A549 (cell line): ENCODE measurements at regions of chr7 and their contacts with region 1.

Region 1: GRCh38 chr7:47818796-47819606 is 129.3 kb downstream of the PKD1L1 start:
- DNase-seq: peak; percentile 72 to 82
- ATAC-seq: peak; percentile 87 to 88; a peak in 5 of 6 replicates
- H3K4me3 ChIP-seq: no peak overlapping the region
- H3K27ac ChIP-seq: peak overlapping the region; percentile 79 to 90
- H3K4me1 ChIP-seq: peaks cover 48% of the 10 kb centered on the region
- CTCF ChIP-seq: peak; percentile 97
- EP300 ChIP-seq: no peak; a peak in 1 of 5 replicates
- POLR2A ChIP-seq: no peak
- RAD21 ChIP-seq: peak; percentile 99

Region 2: GRCh38 chr7:47435889-47436312 is 383.1 kb before region 1 on chr7:
- CTCF ChIA-PET with region 1: interaction called, 11 read pairs
- POLR2A ChIA-PET with region 1: no interaction called
- DNase-seq: peak; percentile 62 to 79
- ATAC-seq: peak; percentile 84 to 94
- H3K4me3 ChIP-seq: no peak overlapping the region
- H3K27ac ChIP-seq: peak overlapping the region; percentile 61 to 74
- H3K4me1 ChIP-seq: peaks cover 45% of the 10 kb centered on the region
- CTCF ChIP-seq: peak; percentile 62
- EP300 ChIP-seq: no peak
- POLR2A ChIP-seq: no peak
- RAD21 ChIP-seq: peak; percentile 66 to 71

Region 3: DNA sequence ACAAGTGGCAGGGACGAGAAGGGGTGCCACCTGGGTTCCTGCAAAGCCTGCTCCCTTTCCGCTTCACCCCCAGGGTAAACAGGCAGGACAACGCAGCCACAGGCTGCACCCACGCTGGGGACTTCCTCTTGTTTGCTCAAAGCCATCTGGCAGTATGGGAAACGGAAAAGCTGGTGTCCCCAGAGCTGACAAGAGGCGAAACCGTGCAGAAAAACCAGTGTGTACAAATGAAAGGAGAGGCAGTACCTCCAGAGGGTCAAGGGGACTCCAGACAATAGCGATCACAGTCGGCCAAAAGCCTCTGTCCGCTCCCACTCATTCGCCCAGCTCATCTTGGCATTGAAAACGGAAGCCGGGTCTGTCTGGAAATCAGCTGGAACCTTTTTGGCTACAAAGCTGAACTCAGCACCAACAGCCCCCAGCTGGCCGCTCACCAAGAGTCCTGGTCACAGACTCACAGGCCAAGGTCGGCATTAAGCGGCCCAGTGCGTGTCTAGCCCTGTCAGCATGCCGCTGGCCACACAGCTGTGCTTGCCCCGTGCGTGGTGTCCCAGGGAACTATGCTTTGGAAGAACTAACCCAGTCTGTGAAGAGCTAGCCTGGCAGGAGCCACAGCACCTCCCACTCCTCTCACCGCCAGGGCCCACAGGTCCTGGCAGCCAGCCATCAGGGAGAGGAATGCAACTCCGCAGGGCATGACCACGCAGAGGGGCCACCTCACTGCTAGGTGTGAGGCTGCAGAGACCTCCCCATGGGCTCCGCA is 247.5 kb before region 1 on chr7:
- CTCF ChIA-PET with region 1: interaction called, 13 read pairs
- POLR2A ChIA-PET with region 1: interaction called, 5 read pairs
- DNase-seq: peak in 1 of 2 experiments; percentile 81
- ATAC-seq: peak; percentile 38 to 55
- H3K4me3 ChIP-seq: peak overlapping the region; percentile 10; the same call in 2 of the 3 replicates
- H3K27ac ChIP-seq: peak overlapping the region; percentile 99 to 100
- H3K4me1 ChIP-seq: peaks cover 99% of the 10 kb centered on the region
- CTCF ChIP-seq: no peak
- EP300 ChIP-seq: peak in 1 of 2 experiments; percentile 48; a peak in 1 of 5 replicates
- POLR2A ChIP-seq: no peak
- RAD21 ChIP-seq: 0 out of 5 replicates have a peak, but pooled peaks of 1 of the 2 experiments have one; percentile 12

Region 4: GRCh38 chr7:47591655-47592572 is 227.1 kb before region 1 on chr7:
- CTCF ChIA-PET with region 1: interaction called, 12 read pairs
- POLR2A ChIA-PET with region 1: no interaction called
- DNase-seq: peak; percentile 73 to 96
- ATAC-seq: peak; percentile 71 to 75
- H3K4me3 ChIP-seq: peak overlapping the region; percentile 36
- H3K27ac ChIP-seq: peak overlapping the region; percentile 99
- H3K4me1 ChIP-seq: peaks cover 88% of the 10 kb centered on the region
- CTCF ChIP-seq: no peak
- EP300 ChIP-seq: peak; percentile 90 to 96; a peak in 4 of 5 replicates
- POLR2A ChIP-seq: no peak
- RAD21 ChIP-seq: peak; percentile 14 to 53

Region 5: DNA sequence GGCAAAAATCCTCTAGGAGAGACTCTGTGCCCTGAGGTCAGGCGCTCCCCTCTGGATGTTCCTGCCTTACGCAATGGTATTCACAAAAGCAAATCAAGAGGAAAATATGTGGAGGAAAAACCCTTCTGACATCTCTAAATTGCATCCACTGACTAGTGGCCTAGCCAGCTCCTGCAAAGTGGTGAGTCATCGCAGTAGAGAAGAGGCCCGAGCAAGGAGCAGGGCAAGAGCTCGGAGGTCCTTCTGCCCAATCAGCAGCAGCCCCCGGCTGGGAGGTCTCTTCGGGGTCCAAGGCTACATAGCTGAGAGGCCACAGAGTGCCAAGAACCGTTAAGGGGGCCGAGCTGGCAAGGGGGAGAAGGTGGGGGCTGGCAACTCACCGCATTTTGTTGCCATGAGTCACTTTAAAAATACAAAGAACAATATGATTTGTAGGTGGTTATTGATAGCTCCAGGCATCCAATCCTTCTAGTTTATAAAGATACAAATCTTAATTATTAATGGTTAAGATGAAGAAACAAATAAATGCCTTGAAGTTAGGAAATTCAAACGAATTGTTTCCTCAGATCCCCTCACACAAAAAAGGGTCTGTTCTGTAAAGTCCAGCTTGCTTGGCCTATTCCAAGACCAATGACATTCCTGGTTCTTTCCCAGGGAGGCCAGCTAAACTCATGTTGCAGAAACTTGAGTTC is 32.3 kb before region 1 on chr7:
- CTCF ChIA-PET with region 1: interaction called, 11 read pairs
- POLR2A ChIA-PET with region 1: no interaction called
- DNase-seq: peak; percentile 90 to 100
- ATAC-seq: peak; percentile 97
- H3K4me3 ChIP-seq: no peak overlapping the region
- H3K27ac ChIP-seq: peak overlapping the region; percentile 95
- H3K4me1 ChIP-seq: peaks cover 70% of the 10 kb centered on the region
- CTCF ChIP-seq: no peak; the same call in 2 of the 3 replicates
- EP300 ChIP-seq: peak; percentile 95 to 99
- POLR2A ChIP-seq: no peak
- RAD21 ChIP-seq: peak; percentile 34 to 74

Region 6: DNA sequence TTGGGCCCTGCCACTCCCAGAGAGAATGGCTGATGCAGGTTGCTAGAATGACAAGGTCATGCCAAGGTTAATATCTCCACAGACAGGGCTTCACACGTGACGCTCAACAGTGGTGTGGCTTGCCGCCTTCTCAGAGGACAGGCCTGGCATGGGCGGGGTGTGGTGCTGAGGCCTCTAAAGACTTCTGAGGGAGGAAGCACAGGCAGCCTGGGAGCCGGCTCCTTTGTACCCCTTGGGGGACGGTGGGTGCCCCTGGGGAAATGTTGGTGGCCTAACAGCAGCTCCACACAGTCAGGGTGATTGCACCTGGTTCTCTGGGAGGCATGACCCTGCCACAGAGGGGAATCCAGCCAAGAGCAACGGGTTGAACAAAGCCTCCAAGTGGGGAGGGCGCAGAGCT is 14.2 kb after region 1 on chr7:
- CTCF ChIA-PET with region 1: interaction called, 15 read pairs
- POLR2A ChIA-PET with region 1: no interaction called
- DNase-seq: no peak
- ATAC-seq: no peak
- H3K4me3 ChIP-seq: no peak overlapping the region
- H3K27ac ChIP-seq: no peak overlapping the region
- H3K4me1 ChIP-seq: no peaks in the 10 kb centered on the region
- CTCF ChIP-seq: no peak
- EP300 ChIP-seq: no peak
- POLR2A ChIP-seq: no peak
- RAD21 ChIP-seq: no peak